ENCODE measurements at regions of chr2 and their contacts with region 1.

Region 1: GRCh38 chr2:239706367-239706766 is 305.5 kb upstream of the HDAC4 start:
- DNase-seq: no peak

Region 2: DNA sequence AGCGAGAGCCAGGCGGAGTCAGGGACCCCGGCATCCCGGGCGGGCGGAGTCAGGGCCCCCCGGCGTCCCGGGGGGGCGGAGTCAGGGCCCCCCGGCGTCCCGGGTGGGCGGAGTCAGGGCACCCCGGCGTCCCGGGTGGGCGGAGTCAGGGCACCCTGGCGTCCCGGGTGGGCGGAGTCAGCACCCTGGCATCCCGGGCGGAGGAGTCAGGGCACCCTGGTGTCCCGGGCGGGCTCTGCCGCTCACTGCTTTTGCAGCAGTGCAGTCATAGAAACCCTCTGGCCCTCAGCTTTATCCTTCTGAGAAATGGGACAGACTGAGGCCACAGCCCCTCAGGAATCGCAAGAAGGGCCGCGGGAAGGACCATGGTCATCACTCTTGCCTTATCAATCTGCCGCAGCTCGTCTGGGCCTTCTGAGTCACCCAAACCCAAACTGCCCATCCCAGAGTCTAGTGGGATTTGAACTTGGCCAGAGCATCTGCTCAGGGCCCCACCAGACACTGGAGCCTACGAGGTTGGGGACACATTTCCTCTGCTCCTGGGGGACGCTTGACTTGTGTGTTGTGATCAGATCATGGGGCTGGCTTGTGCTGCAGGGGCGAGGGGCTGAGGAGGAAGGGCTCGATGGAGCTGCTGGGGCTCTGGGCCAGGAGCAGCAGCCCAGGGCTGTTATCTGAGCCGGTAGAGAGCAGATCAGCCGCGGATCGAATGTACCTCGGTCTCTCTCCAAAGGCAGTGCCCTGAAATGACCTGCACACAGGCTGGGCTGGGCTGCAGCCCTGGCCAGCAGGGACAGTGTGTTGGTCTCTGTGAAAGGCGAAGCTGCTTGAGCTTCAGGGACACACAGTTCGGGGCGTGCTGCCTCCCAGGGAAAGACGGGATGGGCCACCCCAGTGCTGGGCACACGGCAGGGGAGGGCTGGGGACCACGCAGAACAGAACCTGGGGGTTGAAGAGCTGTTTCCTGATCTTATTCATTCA is 15.4 kb before region 1 on chr2:
- intact Hi-C with region 1: loop called in 1 of 2 experiments (anchors 1 kb)
- DNase-seq: no peak

Measured in posterior vena cava (tissue), 2 donors.